GM12878 (cell line): ENCODE measurements at regions of chr16 and their contacts with region 1.

Region 1: GRCh38 chr16:53061701-53062159 is 6.9 kb downstream of the CHD9 start:
- DNase-seq: peak; percentile 96
- ATAC-seq: peak; percentile 78
- H3K4me3 ChIP-seq: peak overlapping the region; percentile 64; the same call in 1 of the 2 replicates
- H3K27ac ChIP-seq: peak overlapping the region; percentile 52
- H3K4me1 ChIP-seq: peaks cover 66% of the 10 kb centered on the region
- H3K27me3 ChIP-seq: no peaks in the 10 kb centered on the region
- CTCF ChIP-seq: peak; percentile 13 to 14 (median 13); a peak in 2 of 6 replicates
- EP300 ChIP-seq: peak; percentile 97 to 98
- POLR2A ChIP-seq: no peak
- RAD21 ChIP-seq: peak; percentile 16; the same call in 1 of the 2 replicates

Region 2: GRCh38 chr16:52727849-52728248 is 333.9 kb before region 1 on chr16:
- CTCF ChIA-PET with region 1: no interaction called
- POLR2A ChIA-PET with region 1: no interaction called
- RAD21 ChIA-PET with region 1: no interaction called
- SMC1A ChIA-PET with region 1: no interaction called
- in situ Hi-C with region 1: no loop called
- intact Hi-C with region 1: no loop called
- DNase-seq: no peak
- ATAC-seq: no peak
- H3K4me3 ChIP-seq: no peak overlapping the region
- H3K27ac ChIP-seq: no peak overlapping the region
- H3K4me1 ChIP-seq: no peaks in the 10 kb centered on the region
- H3K27me3 ChIP-seq: no peaks in the 10 kb centered on the region
- CTCF ChIP-seq: no peak
- EP300 ChIP-seq: no peak
- POLR2A ChIP-seq: no peak
- RAD21 ChIP-seq: no peak

Region 3: DNA sequence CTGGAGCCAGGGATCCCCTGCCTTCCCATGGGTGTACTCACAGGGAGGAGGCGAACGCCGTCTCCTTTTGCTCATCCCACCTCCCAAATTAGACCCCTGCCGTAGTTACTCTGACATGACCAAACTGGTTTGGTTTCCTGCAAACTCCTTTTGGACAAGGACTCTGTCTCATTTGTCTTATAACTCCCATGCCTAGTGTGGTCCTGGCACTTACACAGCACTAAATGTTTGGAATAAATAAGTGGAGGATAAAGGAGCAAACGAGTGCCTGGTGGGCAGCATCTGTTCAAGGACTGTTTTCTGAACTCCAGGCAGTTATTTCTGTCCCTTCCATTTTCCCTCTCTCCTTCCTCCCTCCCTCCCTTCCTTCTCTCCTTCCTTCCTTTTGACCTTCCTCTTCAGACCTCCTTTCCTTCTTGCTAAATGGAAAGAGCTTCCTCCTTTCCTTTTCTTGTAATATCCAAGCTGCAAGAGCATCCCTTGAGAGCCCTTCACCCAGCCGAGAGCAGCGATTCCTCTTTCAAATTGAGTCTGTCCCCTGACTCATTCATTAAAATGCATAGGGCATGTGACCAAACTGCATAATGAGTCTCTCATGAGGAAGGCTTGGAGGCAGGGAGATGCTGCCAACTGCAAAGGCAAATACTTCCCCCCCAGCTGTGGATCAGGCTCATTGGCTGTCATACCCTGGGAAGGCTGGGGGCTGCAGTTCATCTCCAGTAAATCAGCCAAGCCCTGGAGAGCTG is 29.9 kb after region 1 on chr16:
- CTCF ChIA-PET with region 1: interaction called, 14 read pairs
- POLR2A ChIA-PET with region 1: interaction called, 142 read pairs
- RAD21 ChIA-PET with region 1: interaction called, 107 read pairs
- SMC1A ChIA-PET with region 1: interaction called, 270 read pairs
- in situ Hi-C with region 1: loop called (anchors 5 kb)
- intact Hi-C with region 1: no loop called
- DNase-seq: peak; percentile 72
- ATAC-seq: peak; percentile 76
- H3K4me3 ChIP-seq: peak overlapping the region; percentile 55; the same call in 1 of the 2 replicates
- H3K27ac ChIP-seq: peak overlapping the region; percentile 96
- H3K4me1 ChIP-seq: peaks cover 44% of the 10 kb centered on the region
- H3K27me3 ChIP-seq: no peaks in the 10 kb centered on the region
- CTCF ChIP-seq: no peak
- EP300 ChIP-seq: peak in 1 of 2 experiments; percentile 80; a peak in 2 of 4 replicates
- POLR2A ChIP-seq: no peak
- RAD21 ChIP-seq: 0 out of 2 replicates have a peak, but pooled peaks have one; percentile 13

Region 4: GRCh38 chr16:53111078-53111791 is 49.5 kb after region 1 on chr16:
- CTCF ChIA-PET with region 1: interaction called, 3 read pairs
- POLR2A ChIA-PET with region 1: interaction called, 5 read pairs
- RAD21 ChIA-PET with region 1: interaction called, 13 read pairs
- SMC1A ChIA-PET with region 1: interaction called, 32 read pairs
- in situ Hi-C with region 1: no loop called
- intact Hi-C with region 1: loop called (anchors 5 kb)
- DNase-seq: no peak
- ATAC-seq: peak; percentile 79
- H3K4me3 ChIP-seq: no peak overlapping the region; the same call in 1 of the 2 replicates
- H3K27ac ChIP-seq: peak overlapping the region; percentile 77
- H3K4me1 ChIP-seq: peaks cover 28% of the 10 kb centered on the region
- H3K27me3 ChIP-seq: no peaks in the 10 kb centered on the region
- CTCF ChIP-seq: no peak
- EP300 ChIP-seq: no peak
- POLR2A ChIP-seq: no peak
- RAD21 ChIP-seq: no peak

Region 5: DNA sequence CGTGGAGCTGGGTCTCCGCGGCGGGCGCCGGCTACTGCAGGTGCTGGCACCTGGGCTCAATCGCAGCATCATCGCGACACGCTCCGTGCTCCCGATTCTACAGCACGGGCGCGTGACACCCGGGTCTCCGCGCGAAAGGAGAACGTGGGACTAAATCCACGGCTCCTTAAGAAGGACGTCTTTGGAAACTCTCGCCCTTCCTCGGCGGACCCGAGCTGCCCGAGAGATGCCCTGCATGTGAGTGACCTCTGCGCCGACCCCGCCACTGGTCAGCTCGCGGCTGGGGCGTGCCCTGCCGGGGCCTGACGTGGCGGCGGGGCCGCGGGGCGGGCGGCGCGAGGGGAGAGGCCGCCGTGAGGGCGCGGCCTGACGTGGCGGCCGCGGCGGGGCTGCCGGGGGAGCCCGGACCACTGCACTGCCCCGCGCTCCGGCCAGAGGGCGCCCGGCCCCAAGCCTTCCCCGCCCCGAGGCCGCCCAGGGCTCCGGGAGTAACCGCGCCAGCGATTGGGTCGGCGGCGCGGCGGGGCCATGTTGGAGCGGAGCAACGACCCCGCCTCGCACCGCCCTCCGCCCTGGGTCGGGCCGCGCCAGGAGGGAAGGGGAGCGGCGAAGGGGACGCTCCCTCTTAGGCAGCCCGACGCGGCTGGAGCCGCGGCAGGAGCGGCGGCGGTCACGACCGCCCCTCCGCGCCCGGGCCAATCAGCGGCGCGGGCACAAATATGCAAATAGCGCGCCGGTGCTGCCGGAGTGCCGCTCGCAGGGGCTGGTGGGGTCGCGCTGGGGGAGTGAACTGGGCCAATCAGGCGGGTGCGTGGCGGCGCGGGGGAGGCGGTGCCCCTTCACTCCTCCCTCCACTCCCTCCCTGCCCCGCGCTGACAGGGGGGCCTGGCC is 68.7 kb after region 1 on chr16:
- CTCF ChIA-PET with region 1: interaction called, 30 read pairs
- POLR2A ChIA-PET with region 1: interaction called, 13 read pairs
- RAD21 ChIA-PET with region 1: interaction called, 32 read pairs
- SMC1A ChIA-PET with region 1: interaction called, 17 read pairs
- in situ Hi-C with region 1: no loop called
- intact Hi-C with region 1: loop called (anchors 1 kb)
- DNase-seq: peak; percentile 68
- ATAC-seq: peak; percentile 91
- H3K4me3 ChIP-seq: peak overlapping the region; percentile 67
- H3K27ac ChIP-seq: peak overlapping the region; percentile 79
- H3K4me1 ChIP-seq: peaks cover 20% of the 10 kb centered on the region
- H3K27me3 ChIP-seq: no peaks in the 10 kb centered on the region
- CTCF ChIP-seq: peak; percentile 47 to 81 (median 58); a peak in 5 of 6 replicates
- EP300 ChIP-seq: no peak; a peak in 1 of 4 replicates
- POLR2A ChIP-seq: peak; percentile 81
- RAD21 ChIP-seq: peak; percentile 73

Region 6: DNA sequence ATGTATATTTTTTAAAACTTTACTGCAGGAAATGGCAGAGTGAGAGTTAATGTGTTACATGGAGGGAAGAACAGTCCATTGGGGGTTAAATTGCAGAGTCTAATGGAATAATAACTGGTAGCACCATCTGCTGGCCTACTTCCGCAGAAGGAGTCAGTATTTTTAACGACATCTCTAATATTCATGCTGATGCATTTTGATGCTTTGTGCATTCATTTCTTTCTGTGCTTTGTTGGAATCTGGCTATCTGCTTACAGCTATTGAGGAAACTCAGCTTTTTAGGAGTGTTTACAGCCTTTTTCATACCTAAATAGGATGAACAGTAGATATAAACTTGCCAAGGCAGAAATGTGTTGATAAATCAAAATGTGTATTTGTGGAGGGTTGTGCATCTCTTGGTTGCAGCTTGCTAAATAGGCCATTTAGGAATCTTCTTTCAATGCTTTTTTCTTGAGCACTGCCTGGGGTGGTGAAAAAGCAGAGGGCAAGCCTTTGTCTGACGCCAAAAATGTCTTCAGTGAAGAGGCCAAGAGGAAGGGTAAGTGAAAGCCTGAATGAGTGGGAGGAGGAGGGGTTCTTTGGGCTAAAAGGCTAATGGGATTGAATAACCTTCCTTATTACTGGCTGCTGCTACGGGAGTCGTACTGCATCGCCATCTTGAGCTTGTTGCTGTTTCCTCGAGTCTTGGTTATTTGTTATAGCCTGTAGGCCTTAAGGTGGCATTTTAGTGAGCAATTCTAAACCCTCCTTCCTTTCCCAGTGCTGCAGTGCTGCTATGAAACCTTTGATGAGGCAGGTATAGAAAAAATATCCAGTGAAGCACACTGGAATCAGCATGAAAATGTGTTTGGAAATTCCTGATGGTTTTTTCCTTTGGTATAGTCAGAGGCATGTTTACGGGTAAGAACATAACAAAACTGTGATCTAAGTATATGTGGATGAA is 146.4 kb after region 1 on chr16:
- CTCF ChIA-PET with region 1: interaction called, 70 read pairs
- POLR2A ChIA-PET with region 1: interaction called, 4 read pairs
- RAD21 ChIA-PET with region 1: interaction called, 77 read pairs
- SMC1A ChIA-PET with region 1: interaction called, 88 read pairs
- in situ Hi-C with region 1: no loop called
- intact Hi-C with region 1: no loop called
- DNase-seq: peak; percentile 69
- ATAC-seq: peak; percentile 83
- H3K4me3 ChIP-seq: peak overlapping the region; percentile 72
- H3K27ac ChIP-seq: peak overlapping the region; percentile 95
- H3K4me1 ChIP-seq: peaks cover 3% of the 10 kb centered on the region; the same call in 1 of the 2 replicates
- H3K27me3 ChIP-seq: no peaks in the 10 kb centered on the region
- CTCF ChIP-seq: peak; percentile 51 to 63 (median 55)
- EP300 ChIP-seq: no peak
- POLR2A ChIP-seq: peak; percentile 57; the same call in 1 of the 2 replicates
- RAD21 ChIP-seq: peak; percentile 58

Region 7: GRCh38 chr16:53449632-53450517 is 388.1 kb after region 1 on chr16:
- CTCF ChIA-PET with region 1: no interaction called
- POLR2A ChIA-PET with region 1: no interaction called
- RAD21 ChIA-PET with region 1: no interaction called
- SMC1A ChIA-PET with region 1: no interaction called
- in situ Hi-C with region 1: loop called (anchors 10 kb)
- intact Hi-C with region 1: no loop called
- DNase-seq: no peak
- ATAC-seq: peak; percentile 77
- H3K4me3 ChIP-seq: no peak overlapping the region
- H3K27ac ChIP-seq: peak overlapping the region; percentile 25; the same call in 1 of the 2 replicates
- H3K4me1 ChIP-seq: no peaks in the 10 kb centered on the region
- H3K27me3 ChIP-seq: no peaks in the 10 kb centered on the region
- CTCF ChIP-seq: no peak
- EP300 ChIP-seq: no peak; a peak in 1 of 4 replicates
- POLR2A ChIP-seq: no peak
- RAD21 ChIP-seq: no peak